Activated CD8-positive, alpha-beta T cell treated with anti-CD3 and anti-CD28 coated beads for 36 hours (primary cell): ENCODE measurements at regions of chr1 and their contacts with region 1.

Region 1: DNA sequence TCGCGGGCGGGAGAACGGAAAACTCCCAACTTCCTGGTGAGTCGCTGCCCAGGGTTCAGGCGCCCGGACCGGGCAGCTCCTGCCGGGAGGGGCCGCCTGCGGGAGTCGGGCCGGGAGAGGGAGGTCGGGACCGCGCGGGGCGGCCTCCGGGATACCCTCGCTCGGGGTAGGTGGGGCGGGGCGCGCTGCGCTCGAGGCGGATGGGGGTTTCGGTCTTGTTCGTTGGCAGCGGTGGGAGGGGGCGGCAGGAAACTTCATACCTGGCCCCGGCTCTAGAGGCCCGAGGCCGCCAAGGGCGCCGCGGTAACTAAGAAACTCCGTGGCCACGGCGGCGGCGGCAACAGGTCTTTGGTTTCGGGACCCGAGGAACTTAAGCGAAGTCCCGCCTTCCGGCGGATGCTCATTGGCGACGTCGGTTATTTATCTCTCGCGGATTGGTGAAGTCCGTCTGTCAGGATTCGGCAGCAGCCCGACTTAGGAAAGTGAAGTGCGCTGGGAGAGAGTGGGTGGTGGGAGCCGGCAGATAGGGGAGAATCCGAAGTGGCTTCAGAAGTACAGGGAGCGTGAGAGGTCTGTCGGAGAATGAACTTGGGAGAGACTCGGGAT is 546 bp downstream of the NEK7 start:
- DNase-seq: peak; percentile 91
- ATAC-seq: peak; percentile 38
- H3K4me3 Mint-ChIP-seq: peak overlapping the region; percentile 99
- H3K27ac Mint-ChIP-seq: peak overlapping the region; percentile 99
- H3K4me1 Mint-ChIP-seq: peaks cover 29% of the 10 kb centered on the region
- H3K27me3 Mint-ChIP-seq: no peaks in the 10 kb centered on the region
- CTCF ChIP-seq: no peak

Region 2: GRCh38 chr1:197915862-197916499 is 241.4 kb before region 1 on chr1:
- CTCF ChIA-PET with region 1: interaction called, 8 read pairs
- POLR2A ChIA-PET with region 1: no interaction called
- intact Hi-C with region 1: loop called (anchors 5 kb)
- DNase-seq: no peak
- ATAC-seq: no peak
- H3K4me3 Mint-ChIP-seq: peak overlapping the region; percentile 44
- H3K27ac Mint-ChIP-seq: no peak overlapping the region
- H3K4me1 Mint-ChIP-seq: peaks cover 74% of the 10 kb centered on the region
- H3K27me3 Mint-ChIP-seq: peaks cover 94% of the 10 kb centered on the region
- CTCF ChIP-seq: no peak

Region 3: GRCh38 chr1:198088360-198089071 is 68.8 kb before region 1 on chr1:
- CTCF ChIA-PET with region 1: interaction called, 8 read pairs
- POLR2A ChIA-PET with region 1: no interaction called
- intact Hi-C with region 1: loop called (anchors 2 kb)
- DNase-seq: no peak
- ATAC-seq: peak; percentile 74
- H3K4me3 Mint-ChIP-seq: no peak overlapping the region
- H3K27ac Mint-ChIP-seq: peak overlapping the region; percentile 58
- H3K4me1 Mint-ChIP-seq: peaks cover 8% of the 10 kb centered on the region
- H3K27me3 Mint-ChIP-seq: no peaks in the 10 kb centered on the region
- CTCF ChIP-seq: peak; percentile 71

Region 4: GRCh38 chr1:198174297-198174696 is 17.0 kb after region 1 on chr1:
- CTCF ChIA-PET with region 1: interaction called, 4 read pairs
- POLR2A ChIA-PET with region 1: interaction called, 13 read pairs
- intact Hi-C with region 1: no loop called
- DNase-seq: peak; percentile 72
- ATAC-seq: peak; percentile 65
- H3K4me3 Mint-ChIP-seq: peak overlapping the region; percentile 59
- H3K27ac Mint-ChIP-seq: peak overlapping the region; percentile 91
- H3K4me1 Mint-ChIP-seq: peaks cover 86% of the 10 kb centered on the region
- H3K27me3 Mint-ChIP-seq: no peaks in the 10 kb centered on the region
- CTCF ChIP-seq: no peak

Region 5: DNA sequence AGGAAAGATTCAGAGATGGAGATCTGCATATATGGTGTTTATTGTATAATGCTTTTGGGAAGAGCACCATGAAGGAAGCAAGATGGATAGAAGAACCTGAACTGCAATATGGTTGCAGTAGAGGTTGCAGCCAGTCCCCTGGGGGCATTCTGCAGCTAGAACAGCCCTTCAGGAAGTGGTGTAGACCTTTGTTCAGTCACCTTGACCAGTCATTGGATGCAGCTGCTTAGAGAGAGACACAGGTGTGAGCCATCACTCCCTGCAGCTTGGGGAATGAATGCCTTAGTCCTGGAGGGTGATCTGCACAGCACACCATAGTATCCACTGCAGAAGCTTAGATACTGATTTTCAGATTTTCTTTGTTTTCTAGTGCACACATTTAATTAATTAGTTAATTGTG is 41.8 kb after region 1 on chr1:
- CTCF ChIA-PET with region 1: interaction called, 4 read pairs
- POLR2A ChIA-PET with region 1: interaction called, 3 read pairs
- intact Hi-C with region 1: loop called (anchors 1 kb)
- DNase-seq: no peak
- ATAC-seq: peak; percentile 21
- H3K4me3 Mint-ChIP-seq: no peak overlapping the region
- H3K27ac Mint-ChIP-seq: no peak overlapping the region
- H3K4me1 Mint-ChIP-seq: peaks cover 80% of the 10 kb centered on the region
- H3K27me3 Mint-ChIP-seq: no peaks in the 10 kb centered on the region
- CTCF ChIP-seq: no peak

Region 6: GRCh38 chr1:198298640-198299039 is 141.3 kb after region 1 on chr1:
- CTCF ChIA-PET with region 1: no interaction called
- POLR2A ChIA-PET with region 1: no interaction called
- intact Hi-C with region 1: no loop called
- DNase-seq: no peak
- ATAC-seq: no peak
- H3K4me3 Mint-ChIP-seq: no peak overlapping the region
- H3K27ac Mint-ChIP-seq: no peak overlapping the region
- H3K4me1 Mint-ChIP-seq: peaks cover 11% of the 10 kb centered on the region
- H3K27me3 Mint-ChIP-seq: no peaks in the 10 kb centered on the region
- CTCF ChIP-seq: no peak

Region 7: DNA sequence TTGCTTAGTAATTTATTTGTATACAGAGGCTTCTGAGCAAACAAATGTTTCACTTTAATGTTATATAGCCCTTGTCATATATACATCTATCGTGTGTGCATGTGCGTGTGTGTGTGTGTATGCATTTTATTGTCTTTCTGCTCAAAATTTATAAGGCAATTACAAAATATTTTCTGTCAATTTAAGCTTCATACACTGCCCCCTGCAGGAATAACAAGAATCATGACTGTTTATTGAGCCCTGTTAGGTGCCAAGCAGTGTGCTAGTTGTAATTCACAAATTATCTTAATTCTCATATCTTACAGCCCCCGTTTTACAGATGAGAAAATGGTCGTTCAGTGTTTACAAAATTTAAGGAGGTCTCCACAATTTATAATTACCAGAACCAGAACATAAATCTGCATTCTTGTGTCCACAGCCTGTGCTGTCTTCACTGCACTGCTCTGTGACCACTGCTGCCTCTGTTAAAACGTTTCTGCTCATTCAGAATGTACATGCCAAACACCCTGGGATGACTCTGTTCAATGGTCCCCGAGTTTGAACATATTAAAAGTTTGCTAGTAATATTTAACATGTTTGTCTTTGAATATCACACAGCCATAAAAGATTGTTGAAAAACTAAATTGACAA is 201.8 kb after region 1 on chr1:
- CTCF ChIA-PET with region 1: interaction called, 8 read pairs
- POLR2A ChIA-PET with region 1: no interaction called
- intact Hi-C with region 1: loop called (anchors 5 kb)
- DNase-seq: no peak
- ATAC-seq: peak; percentile 27
- H3K4me3 Mint-ChIP-seq: no peak overlapping the region
- H3K27ac Mint-ChIP-seq: no peak overlapping the region
- H3K4me1 Mint-ChIP-seq: peaks cover 2% of the 10 kb centered on the region
- H3K27me3 Mint-ChIP-seq: no peaks in the 10 kb centered on the region
- CTCF ChIP-seq: peak; percentile 74

Region 8: GRCh38 chr1:198778049-198778448 is 620.7 kb after region 1 on chr1:
- CTCF ChIA-PET with region 1: no interaction called
- POLR2A ChIA-PET with region 1: no interaction called
- intact Hi-C with region 1: no loop called
- DNase-seq: no peak
- ATAC-seq: no peak
- H3K4me3 Mint-ChIP-seq: no peak overlapping the region
- H3K27ac Mint-ChIP-seq: no peak overlapping the region
- H3K4me1 Mint-ChIP-seq: peaks cover 8% of the 10 kb centered on the region
- H3K27me3 Mint-ChIP-seq: peaks cover 2% of the 10 kb centered on the region
- CTCF ChIP-seq: no peak